Endothelial cell of umbilical vein (primary cell): ENCODE measurements at regions of chr11 and their contacts with region 1.

Region 1: DNA sequence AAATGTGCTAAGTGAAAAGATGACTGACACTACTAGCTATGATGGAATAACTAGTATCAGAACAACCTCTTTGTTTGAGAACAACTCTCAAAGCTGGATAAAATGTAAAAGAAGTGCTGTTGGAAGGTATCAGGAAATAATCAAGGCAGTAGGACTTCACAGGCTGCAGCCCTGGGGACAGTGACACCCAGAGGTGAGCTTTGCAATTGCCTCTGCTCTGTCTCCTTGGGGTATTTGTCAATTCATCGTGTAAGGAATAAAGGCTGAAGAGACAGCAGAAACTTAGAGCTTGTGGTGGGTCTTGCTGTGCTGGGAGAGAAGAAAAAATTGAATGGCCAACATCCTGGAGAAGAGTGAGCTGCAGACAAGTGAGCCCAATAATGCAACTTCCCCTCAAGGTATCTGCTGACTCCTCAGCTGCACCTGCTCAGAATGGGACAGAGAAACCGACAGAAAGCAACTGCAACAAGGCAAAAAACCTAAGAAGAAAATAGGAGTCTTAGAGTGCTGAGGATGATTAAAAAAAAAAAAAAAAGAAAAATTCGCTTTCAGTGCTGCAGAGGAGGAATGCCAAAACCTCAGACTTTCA is 141.1 kb downstream of the RCN1 start:
- DNase-seq: peak; percentile 21
- H3K4me3 ChIP-seq: no peak overlapping the region
- H3K27ac ChIP-seq: no peak overlapping the region
- H3K4me1 ChIP-seq: no peaks in the 10 kb centered on the region
- H3K27me3 ChIP-seq: no peaks in the 10 kb centered on the region
- CTCF ChIP-seq: peak; percentile 53 to 69
- POLR2A ChIP-seq: no peak

Region 2: GRCh38 chr11:32162351-32162750 is 69.6 kb before region 1 on chr11:
- CTCF ChIA-PET with region 1: no interaction called
- POLR2A ChIA-PET with region 1: no interaction called
- dilution Hi-C with region 1: no loop called
- intact Hi-C with region 1: no loop called
- DNase-seq: no peak
- H3K4me3 ChIP-seq: no peak overlapping the region
- H3K27ac ChIP-seq: no peak overlapping the region
- H3K4me1 ChIP-seq: no peaks in the 10 kb centered on the region
- H3K27me3 ChIP-seq: peaks cover 13 to 22% of the 10 kb centered on the region in 2 experiments
- CTCF ChIP-seq: no peak
- POLR2A ChIP-seq: no peak

Region 3: DNA sequence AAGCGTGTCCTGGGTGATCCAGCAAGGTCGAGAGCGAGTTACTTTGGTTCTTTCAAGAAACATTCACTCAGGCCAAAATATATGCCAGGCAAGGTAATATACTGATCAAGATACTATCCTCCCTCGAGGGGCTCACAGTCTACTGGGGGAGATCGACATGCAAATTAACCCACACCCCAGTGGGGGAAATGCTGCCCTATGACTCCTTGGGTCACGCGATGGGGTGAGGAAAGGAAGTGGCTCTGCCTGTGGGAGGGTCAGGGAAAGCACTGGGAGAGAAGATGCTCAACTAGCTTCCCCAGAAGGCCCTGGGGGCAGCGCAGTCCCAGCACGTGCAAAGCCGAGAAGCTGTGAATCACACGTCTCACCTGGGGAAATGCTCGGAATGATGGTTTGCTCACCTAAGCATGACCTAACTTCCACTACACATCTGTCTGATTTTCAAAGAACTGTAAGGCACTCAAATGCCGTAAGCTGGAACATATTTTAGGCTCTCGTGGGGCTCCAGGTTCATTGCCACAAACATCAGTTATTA is 10.5 kb before region 1 on chr11:
- CTCF ChIA-PET with region 1: interaction called, 12 read pairs
- POLR2A ChIA-PET with region 1: no interaction called
- dilution Hi-C with region 1: no loop called
- intact Hi-C with region 1: no loop called
- DNase-seq: no peak
- H3K4me3 ChIP-seq: no peak overlapping the region
- H3K27ac ChIP-seq: no peak overlapping the region
- H3K4me1 ChIP-seq: no peaks in the 10 kb centered on the region
- H3K27me3 ChIP-seq: no peaks in the 10 kb centered on the region
- CTCF ChIP-seq: no peak
- POLR2A ChIP-seq: no peak

Region 4: DNA sequence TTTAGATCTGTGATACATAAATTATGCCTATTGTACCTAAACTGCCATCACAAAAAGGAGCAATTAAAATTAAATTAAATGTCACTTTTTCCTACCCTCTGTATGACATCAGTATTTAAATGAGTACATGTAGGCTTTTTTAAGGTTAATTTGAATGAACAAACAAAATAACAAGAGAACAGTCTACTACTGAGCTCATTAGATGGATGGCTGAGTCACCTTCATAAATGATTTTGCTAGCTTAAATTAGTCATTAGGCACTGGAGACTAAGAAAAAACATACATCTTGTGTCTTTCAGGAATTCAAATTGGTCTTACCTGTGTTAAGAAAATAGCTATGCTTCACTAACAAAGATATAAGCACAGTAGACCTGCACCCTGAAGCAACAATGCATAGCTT is 12.5 kb after region 1 on chr11:
- CTCF ChIA-PET with region 1: interaction called, 24 read pairs
- POLR2A ChIA-PET with region 1: no interaction called
- dilution Hi-C with region 1: no loop called
- intact Hi-C with region 1: no loop called
- DNase-seq: no peak
- H3K4me3 ChIP-seq: no peak overlapping the region
- H3K27ac ChIP-seq: no peak overlapping the region
- H3K4me1 ChIP-seq: no peaks in the 10 kb centered on the region
- H3K27me3 ChIP-seq: no peaks in the 10 kb centered on the region
- CTCF ChIP-seq: no peak
- POLR2A ChIP-seq: no peak

Region 5: GRCh38 chr11:32538804-32539203 is 306.8 kb after region 1 on chr11:
- CTCF ChIA-PET with region 1: no interaction called
- POLR2A ChIA-PET with region 1: no interaction called
- dilution Hi-C with region 1: no loop called
- intact Hi-C with region 1: no loop called
- DNase-seq: no peak
- H3K4me3 ChIP-seq: no peak overlapping the region
- H3K27ac ChIP-seq: no peak overlapping the region
- H3K4me1 ChIP-seq: no peaks in the 10 kb centered on the region
- H3K27me3 ChIP-seq: no peaks in the 10 kb centered on the region
- CTCF ChIP-seq: no peak
- POLR2A ChIP-seq: no peak